ENCODE measurements at regions of chr5 and their contacts with region 1.

Region 1: DNA sequence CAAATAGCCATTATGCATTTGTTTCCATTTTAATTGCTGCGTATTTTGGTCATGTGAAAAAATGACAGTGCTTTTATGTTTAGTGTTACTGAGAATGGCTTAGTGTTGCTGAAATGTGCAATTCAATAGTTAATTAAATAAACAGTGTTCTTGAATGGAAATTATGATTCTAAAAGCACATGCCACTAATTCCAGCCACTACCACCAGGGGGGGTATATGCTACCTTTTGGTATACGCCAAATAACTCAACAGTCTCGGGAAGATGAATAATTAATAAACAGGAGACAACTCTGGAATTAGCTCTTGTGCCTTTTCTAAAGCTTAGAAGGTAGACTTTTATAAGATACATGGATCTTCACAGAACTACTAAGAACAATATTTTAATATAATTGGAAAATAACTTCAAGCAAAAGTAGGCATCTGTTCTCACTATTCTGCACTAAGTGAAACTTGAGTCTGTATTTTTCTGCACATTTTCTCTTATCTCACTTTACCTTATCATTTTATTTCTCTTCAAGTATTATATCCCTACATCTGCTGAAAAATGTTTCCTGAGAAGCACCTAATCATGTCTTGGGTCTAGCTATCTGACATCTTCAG is 83.5 kb upstream of the MINAR2 start:
- DNase-seq: peak; percentile 18
- H3K4me3 ChIP-seq: no peak overlapping the region
- H3K27ac ChIP-seq: no peak overlapping the region
- H3K27me3 ChIP-seq: no peaks in the 10 kb centered on the region
- CTCF ChIP-seq: peak; percentile 89

Region 2: DNA sequence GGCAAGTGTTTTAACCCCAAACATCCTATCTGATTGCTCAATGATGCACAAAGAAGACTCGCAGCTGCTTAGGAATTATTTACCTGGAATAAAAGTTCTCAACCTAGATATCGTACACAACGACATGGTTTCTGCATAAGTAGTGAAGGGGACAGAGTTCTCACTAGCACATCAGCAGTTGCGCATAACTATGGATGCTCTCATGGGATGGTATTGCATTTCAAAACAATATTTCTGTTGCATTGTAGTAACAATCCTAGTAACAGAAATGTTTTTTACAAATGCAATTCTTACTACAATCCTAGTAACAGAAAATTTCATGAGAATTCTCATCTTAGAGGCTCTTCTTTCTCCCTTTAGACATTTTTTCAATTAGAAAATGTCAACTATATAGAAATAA is 11.0 kb before region 1 on chr5:
- CTCF ChIA-PET with region 1: interaction called, 16 read pairs
- POLR2A ChIA-PET with region 1: no interaction called
- DNase-seq: no peak
- H3K4me3 ChIP-seq: no peak overlapping the region
- H3K27ac ChIP-seq: no peak overlapping the region
- H3K27me3 ChIP-seq: no peaks in the 10 kb centered on the region
- CTCF ChIP-seq: no peak

Region 3: DNA sequence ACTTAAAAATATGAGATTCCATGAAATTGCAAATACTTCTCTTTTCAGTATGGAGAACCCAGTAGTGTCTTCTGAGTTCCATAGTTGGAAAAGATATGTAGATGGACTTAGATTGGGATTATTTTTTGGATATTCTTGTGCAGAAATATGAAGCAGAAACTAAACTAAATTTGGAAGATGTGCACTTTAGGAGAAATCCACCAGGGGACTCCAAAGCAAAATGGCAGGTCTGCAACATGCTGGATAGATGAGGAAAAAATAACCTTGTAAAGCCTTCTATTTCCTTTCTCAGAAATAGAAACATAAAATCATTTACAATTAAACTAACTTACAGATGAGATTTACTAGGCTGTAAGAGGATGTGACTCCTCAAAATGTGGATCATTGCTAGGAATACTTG is 34.2 kb after region 1 on chr5:
- CTCF ChIA-PET with region 1: interaction called, 11 read pairs
- POLR2A ChIA-PET with region 1: no interaction called
- DNase-seq: no peak
- H3K4me3 ChIP-seq: no peak overlapping the region
- H3K27ac ChIP-seq: no peak overlapping the region
- H3K27me3 ChIP-seq: no peaks in the 10 kb centered on the region
- CTCF ChIP-seq: peak; percentile 23; the same call in 1 of the 2 replicates

Region 4: DNA sequence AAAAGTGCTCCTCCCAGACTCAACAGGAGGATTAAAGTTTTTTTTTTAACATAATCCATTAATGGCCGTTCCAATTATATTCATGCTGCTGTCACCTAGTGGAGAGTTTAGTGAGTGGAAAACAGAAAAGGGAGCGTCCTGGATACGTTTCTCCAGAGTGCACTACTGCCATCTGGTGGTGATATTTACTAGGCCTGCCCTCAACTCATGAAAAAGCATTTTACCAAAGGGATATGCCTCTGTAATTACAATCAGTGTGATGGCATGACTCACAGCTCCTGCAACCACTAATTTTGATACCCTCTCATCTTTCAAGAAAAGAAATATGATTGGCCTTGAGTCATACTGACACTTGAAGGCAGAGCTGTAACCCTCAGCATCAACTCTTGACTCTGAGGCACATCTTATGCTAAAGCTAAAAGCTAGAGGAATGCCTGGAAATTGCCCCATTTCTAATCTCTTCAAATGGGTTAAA is 103.5 kb after region 1 on chr5:
- CTCF ChIA-PET with region 1: interaction called, 87 read pairs
- POLR2A ChIA-PET with region 1: no interaction called
- DNase-seq: peak; percentile 71
- H3K4me3 ChIP-seq: no peak overlapping the region
- H3K27ac ChIP-seq: peak overlapping the region; percentile 21
- H3K27me3 ChIP-seq: no peaks in the 10 kb centered on the region
- CTCF ChIP-seq: peak; percentile 100